ENCODE measurements at regions of chr20 and their contacts with region 1.

Region 1: DNA sequence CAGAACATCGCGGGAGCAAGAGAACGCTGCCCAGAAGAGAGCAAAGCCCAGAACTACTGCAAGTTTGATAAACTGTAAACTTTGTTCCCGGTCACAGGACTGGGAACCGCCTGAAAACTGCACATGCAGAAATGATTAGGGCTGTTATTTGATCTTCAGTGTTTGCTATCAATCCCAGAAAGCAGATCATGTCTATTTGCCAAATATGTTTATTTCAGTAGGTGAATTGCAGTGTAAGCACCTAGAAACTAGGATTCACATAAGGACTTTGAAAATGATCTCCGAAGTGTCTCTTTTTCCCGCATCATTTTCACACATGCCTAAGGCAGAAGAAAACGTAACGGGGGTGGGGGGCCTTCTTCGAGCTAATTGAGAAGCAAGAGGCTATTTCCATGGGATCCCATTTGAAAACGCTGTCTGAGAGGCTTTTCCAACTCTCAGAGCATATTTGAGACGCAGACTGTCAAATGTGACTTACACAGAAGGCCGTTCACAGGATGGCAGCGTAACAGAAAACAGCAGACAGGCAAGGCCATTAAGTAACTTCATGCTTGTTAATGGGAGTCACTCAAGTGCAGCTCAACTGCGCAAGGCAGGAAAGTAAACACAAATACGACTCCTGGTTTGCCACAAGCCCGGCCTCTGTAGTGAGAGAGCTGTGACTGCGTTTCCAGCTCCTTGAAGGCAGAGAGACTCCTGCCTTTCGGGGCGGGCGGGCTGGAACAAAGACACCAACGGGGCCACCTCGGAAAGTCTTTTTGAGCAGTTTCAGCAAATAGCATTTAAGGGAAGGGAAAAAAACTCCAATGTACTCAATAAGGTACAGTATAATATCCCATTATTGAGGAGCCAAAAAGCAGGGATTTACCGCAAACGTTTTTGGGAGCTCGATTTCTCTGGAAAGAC is 144.7 kb upstream of the ZNF217 start:
- DNase-seq: peak; percentile 94
- H3K4me3 ChIP-seq: peak overlapping the region; percentile 35
- CTCF ChIP-seq: no peak

Region 2: GRCh38 chr20:53594068-53595017 is 143.9 kb before region 1 on chr20:
- CTCF ChIA-PET with region 1: no interaction called
- POLR2A ChIA-PET with region 1: interaction called, 12 read pairs
- DNase-seq: no peak
- H3K4me3 ChIP-seq: peak overlapping the region; percentile 72
- CTCF ChIP-seq: peak; percentile 9

Region 3: GRCh38 chr20:53718142-53719021 is 19.9 kb before region 1 on chr20:
- CTCF ChIA-PET with region 1: no interaction called
- POLR2A ChIA-PET with region 1: no interaction called
- DNase-seq: no peak
- H3K4me3 ChIP-seq: no peak overlapping the region
- CTCF ChIP-seq: no peak

Region 4: GRCh38 chr20:53750827-53751619 is 12.7 kb after region 1 on chr20:
- CTCF ChIA-PET with region 1: interaction called, 10 read pairs
- POLR2A ChIA-PET with region 1: interaction called, 6 read pairs
- DNase-seq: peak; percentile 71
- H3K4me3 ChIP-seq: no peak overlapping the region
- CTCF ChIP-seq: no peak